ENCODE measurements at regions of chr11 and their contacts with region 1.

Region 1: GRCh38 chr11:10792398-10792975 is 16.2 kb downstream of the EIF4G2 start:
- DNase-seq: peak; percentile 95
- ATAC-seq: peak; percentile 95 to 96
- H3K4me3 ChIP-seq: no peak overlapping the region
- H3K27ac ChIP-seq: no peak overlapping the region
- H3K4me1 ChIP-seq: peaks cover 17% of the 10 kb centered on the region
- H3K27me3 ChIP-seq: no peaks in the 10 kb centered on the region
- CTCF ChIP-seq: peak; percentile 96

Region 2: DNA sequence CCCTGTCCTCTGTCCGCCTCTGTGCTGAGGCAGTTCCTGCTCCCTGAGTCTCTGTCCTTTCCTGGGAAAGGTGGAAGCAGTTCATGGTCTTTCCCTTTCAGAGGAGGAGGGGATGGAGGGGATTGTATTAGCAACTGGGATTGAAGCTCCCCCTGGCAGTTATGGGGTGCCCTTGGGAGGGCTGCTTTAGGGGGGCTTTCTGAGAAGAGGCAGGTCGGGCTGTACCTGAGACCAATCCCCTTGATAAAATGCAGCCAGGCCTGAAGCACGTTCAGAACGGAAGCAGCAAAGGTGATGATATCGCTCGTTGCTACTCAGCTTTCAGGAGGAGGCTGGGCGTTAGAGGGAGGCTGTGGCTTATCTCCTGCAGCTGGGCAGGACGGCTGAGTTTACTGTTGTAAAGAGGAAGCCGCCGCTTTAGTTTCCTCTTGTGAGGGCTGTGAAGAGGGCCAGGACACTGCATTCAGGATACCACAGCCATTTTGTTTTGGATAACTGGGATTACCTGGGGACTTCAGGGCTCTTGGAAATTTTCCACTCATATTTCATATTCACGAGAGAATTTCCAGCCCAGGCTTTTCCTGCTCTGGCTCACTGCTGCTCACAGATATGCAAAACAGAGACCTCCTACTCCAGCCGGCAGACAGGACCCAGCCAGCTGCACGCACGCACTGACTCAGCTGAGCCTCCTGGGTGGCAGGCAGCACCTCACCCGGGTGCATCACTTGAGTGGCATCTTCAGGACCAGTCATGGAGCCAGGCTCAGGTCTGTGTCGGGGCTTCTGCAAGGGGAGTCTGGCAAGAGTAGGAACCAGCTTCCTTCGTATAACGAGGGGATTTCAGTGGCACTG is 336.6 kb before region 1 on chr11:
- intact Hi-C with region 1: no loop called
- DNase-seq: peak; percentile 67
- ATAC-seq: peak; percentile 59 to 80
- H3K4me3 ChIP-seq: peak overlapping the region; percentile 44
- H3K27ac ChIP-seq: peak overlapping the region; percentile 56
- H3K4me1 ChIP-seq: peaks cover 48% of the 10 kb centered on the region
- H3K27me3 ChIP-seq: no peaks in the 10 kb centered on the region
- CTCF ChIP-seq: no peak

Region 3: DNA sequence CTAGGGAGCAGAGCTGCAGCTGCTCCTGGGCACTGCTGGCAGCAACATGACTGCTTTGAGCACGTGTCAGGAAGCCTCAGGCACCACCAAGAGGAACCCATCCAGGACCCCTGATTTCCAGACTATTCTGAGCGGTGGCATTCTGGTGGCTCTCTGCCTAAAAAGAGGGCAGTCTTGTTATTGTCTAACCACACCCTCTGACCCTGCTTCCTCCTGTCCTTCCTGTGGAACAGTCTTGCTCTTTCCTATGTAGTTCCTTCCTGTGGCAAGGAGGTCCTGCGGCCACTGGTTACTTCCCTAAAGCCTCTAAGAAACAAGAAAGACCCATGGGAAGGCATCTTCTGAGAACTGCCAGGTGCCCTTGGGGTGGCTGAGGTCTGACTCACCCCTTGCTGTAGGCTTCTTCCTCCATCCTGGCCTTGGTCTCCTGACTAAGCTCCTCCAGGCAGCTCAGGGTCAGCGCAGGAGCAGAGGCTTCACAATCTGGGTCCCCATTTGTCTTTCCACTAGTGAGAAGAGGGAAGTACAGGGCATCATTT is 210.9 kb before region 1 on chr11:
- intact Hi-C with region 1: no loop called
- DNase-seq: peak; percentile 69
- ATAC-seq: peak; percentile 66 to 76
- H3K4me3 ChIP-seq: no peak overlapping the region
- H3K27ac ChIP-seq: peak overlapping the region; percentile 61
- H3K4me1 ChIP-seq: peaks cover 69% of the 10 kb centered on the region
- H3K27me3 ChIP-seq: no peaks in the 10 kb centered on the region
- CTCF ChIP-seq: no peak

Region 4: GRCh38 chr11:11022125-11022730 is 229.7 kb after region 1 on chr11:
- intact Hi-C with region 1: loop called (anchors 5 kb)
- DNase-seq: no peak
- ATAC-seq: peak in 1 of 2 donors; percentile 54
- H3K4me3 ChIP-seq: no peak overlapping the region
- H3K27ac ChIP-seq: no peak overlapping the region
- H3K4me1 ChIP-seq: no peaks in the 10 kb centered on the region
- H3K27me3 ChIP-seq: no peaks in the 10 kb centered on the region
- CTCF ChIP-seq: peak; percentile 49